Heart left ventricle (tissue), 16 donors: ENCODE measurements at regions of chr5 and their contacts with region 1.

Region 1: DNA sequence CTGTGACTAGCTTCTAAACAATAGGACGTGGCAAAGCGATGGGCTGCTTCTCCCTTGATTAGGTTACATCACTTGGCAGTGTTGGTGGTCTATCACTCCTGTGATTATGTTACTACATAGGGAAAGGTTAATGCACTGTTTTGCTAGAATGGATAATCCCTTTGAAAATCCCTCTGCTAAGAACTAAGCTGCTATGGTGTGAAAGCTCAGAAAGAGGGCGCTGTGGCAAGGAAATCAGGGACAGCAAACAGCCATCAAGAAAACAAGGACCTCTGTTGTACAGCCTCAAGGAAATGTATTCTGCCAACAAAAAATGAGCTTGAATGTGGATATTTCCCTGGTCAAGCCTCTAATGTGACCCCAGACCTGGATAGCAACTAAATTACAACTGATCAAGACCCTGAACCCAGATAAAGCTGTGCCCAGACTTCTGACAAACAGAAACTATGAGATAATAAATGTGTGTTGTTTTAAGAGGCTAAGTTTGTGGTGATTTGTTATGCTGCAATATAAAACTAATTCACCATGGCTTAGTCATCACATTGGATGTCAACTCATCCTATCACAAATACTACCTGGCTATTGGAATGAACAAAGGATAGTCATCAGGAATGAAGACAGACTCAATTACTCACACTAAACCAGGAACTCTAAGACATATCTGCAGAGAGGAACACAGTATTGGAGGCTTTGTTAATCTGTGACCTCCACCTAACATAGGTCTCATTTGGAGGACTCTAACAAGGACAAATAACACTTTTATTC is 1215.9 kb downstream of the EFNA5 start:
- DNase-seq: peak in 2 of 5 donors; percentile 18 to 25
- ATAC-seq: peak in 2 of 4 donors; percentile 32 to 41
- H3K4me3 ChIP-seq: no peak overlapping the region
- H3K27ac ChIP-seq: no peak overlapping the region
- H3K4me1 ChIP-seq: no peaks in the 10 kb centered on the region
- H3K27me3 ChIP-seq: no peaks in the 10 kb centered on the region
- CTCF ChIP-seq: peak in 9 of 12 donors; percentile 20 to 59 (median 39)
- POLR2A ChIP-seq: no peak

Region 2: DNA sequence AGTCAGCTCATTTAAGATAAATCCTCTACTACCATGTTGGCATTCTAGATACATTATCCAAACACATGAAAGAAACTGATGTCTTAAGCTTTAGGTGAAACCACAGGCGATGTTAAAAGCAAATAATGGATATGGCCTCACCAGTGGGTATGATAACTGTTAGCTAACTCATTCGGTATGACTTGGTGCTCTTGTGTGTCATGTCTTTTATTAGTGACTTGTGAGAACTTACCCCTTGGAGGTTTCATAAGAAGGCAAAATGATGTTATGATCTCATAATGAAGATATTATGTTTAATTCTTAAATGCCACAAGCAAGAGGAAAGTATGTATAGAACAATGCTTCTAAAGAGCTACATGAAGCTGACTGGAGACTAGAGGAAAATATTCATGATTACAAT is 11.1 kb before region 1 on chr5:
- intact Hi-C with region 1: loop called in 1 of 10 experiments (anchors 1 kb)
- DNase-seq: no peak
- ATAC-seq: no peak
- H3K4me3 ChIP-seq: no peak overlapping the region
- H3K27ac ChIP-seq: no peak overlapping the region
- H3K4me1 ChIP-seq: no peaks in the 10 kb centered on the region
- H3K27me3 ChIP-seq: no peaks in the 10 kb centered on the region
- CTCF ChIP-seq: no peak
- POLR2A ChIP-seq: no peak

Region 3: DNA sequence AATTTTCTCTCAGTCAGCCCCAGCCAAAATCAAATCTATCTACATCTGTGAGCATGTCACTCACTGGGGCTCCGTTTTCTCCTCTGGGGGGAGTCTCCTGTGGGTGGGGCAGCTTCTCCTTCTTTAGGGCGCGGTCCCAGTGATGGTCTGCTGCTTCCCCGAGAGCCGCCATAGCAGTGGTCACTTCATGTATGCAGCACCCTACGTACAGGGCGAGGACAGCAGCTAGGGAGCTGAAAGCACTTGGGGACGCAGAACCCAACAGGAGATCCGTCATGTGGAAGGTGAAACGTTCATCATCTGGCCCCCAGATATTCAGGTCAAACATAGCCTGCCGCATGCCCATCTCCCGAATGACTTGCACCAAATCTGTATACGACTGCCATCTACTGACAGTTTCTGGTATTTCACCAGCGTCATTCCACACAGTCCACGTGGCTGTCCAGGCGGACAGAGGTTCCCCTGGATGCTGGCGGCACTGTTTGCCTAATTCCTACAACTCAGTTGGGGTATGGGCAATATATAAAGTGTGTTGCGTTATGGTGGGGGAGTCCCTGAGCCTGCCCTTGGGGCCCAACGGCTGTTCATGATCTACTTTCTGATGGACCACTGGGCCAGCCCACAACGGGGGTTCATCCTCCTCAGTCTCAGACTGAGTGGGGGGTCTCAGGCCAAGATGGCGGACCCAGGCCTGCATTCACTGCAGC is 420.9 kb after region 1 on chr5:
- intact Hi-C with region 1: loop called in 2 of 10 experiments (anchors 10 kb)
- DNase-seq: no peak
- ATAC-seq: peak in 3 of 4 donors; percentile 45 to 70 (median 46)
- H3K4me3 ChIP-seq: no peak overlapping the region
- H3K27ac ChIP-seq: no peak overlapping the region
- H3K4me1 ChIP-seq: no peaks in the 10 kb centered on the region
- H3K27me3 ChIP-seq: no peaks in the 10 kb centered on the region
- CTCF ChIP-seq: peak; percentile 27 to 63 (median 50)
- POLR2A ChIP-seq: no peak